ENCODE measurements at regions of chr12 and their contacts with region 1.

Region 1: GRCh38 chr12:101186291-101186690 is 23.7 kb downstream of the SLC5A8 start:
- DNase-seq: no peak
- H3K4me3 ChIP-seq: no peak overlapping the region
- H3K27ac ChIP-seq: no peak overlapping the region
- H3K4me1 ChIP-seq: no peaks in the 10 kb centered on the region
- H3K27me3 ChIP-seq: no peaks in the 10 kb centered on the region
- CTCF ChIP-seq: no peak
- POLR2A ChIP-seq: no peak

Region 2: GRCh38 chr12:100877776-100878175 is 308.5 kb before region 1 on chr12:
- intact Hi-C with region 1: no loop called
- DNase-seq: no peak
- H3K4me3 ChIP-seq: no peak overlapping the region
- H3K27ac ChIP-seq: no peak overlapping the region
- H3K4me1 ChIP-seq: no peaks in the 10 kb centered on the region
- H3K27me3 ChIP-seq: no peaks in the 10 kb centered on the region
- CTCF ChIP-seq: no peak
- POLR2A ChIP-seq: no peak

Region 3: GRCh38 chr12:102343361-102344121 is 1157.2 kb after region 1 on chr12:
- intact Hi-C with region 1: loop called (anchors 5 kb)
- DNase-seq: no peak
- H3K4me3 ChIP-seq: no peak overlapping the region
- H3K27ac ChIP-seq: no peak overlapping the region
- H3K4me1 ChIP-seq: no peaks in the 10 kb centered on the region
- H3K27me3 ChIP-seq: no peaks in the 10 kb centered on the region
- CTCF ChIP-seq: no peak
- POLR2A ChIP-seq: no peak

Measured in breast epithelium (tissue), 4 donors.